ENCODE measurements at regions of chr1 and their contacts with region 1.

Region 1: DNA sequence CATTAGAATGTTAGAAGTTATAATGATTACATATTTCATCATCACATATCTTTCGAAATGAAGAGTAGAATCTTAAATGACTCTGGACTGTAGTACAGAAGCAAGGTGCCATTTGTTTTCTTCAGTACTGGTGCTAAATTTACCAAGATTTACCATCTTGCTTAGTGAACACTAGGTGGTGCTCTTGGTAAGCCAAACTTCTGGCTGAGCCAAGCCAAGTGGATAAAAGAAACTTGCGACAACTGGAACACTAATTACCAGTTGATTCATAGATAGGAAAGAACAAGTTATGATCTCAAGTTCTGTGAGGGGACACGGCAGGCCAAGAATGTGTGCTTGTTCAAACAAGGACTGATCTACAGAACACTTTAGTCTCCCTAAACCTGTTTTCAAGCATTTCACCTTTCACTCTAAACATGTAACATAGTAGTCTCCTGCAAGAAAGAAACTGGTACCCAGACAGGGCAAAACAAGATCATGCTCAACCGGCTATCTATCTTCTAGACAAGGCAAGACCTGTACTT is 19.8 kb downstream of the SPRTN start:
- DNase-seq: no peak
- ATAC-seq: peak; percentile 93
- H3K4me3 ChIP-seq: no peak overlapping the region
- H3K27ac ChIP-seq: no peak overlapping the region
- H3K4me1 ChIP-seq: no peaks in the 10 kb centered on the region
- H3K27me3 ChIP-seq: no peaks in the 10 kb centered on the region
- CTCF ChIP-seq: peak; percentile 78

Region 2: GRCh38 chr1:231603598-231604275 is 245.8 kb after region 1 on chr1:
- intact Hi-C with region 1: loop called (anchors 5 kb)
- DNase-seq: no peak
- ATAC-seq: peak; percentile 77
- H3K4me3 ChIP-seq: peak overlapping the region; percentile 51
- H3K27ac ChIP-seq: no peak overlapping the region
- H3K4me1 ChIP-seq: peaks cover 15% of the 10 kb centered on the region
- H3K27me3 ChIP-seq: no peaks in the 10 kb centered on the region
- CTCF ChIP-seq: peak; percentile 86